Activated T-helper 2 cell treated with anti-CD3 and anti-CD28 coated beads, Interferon-gamma antibody, Interleukin-2, Interleukin-4, amounts not matched to agents 10 μg/mL and 5 μg/mL and 100 μg/mL, durations not matched to agents 14 hours and 24 hours and 36 hours (primary cell): ENCODE measurements at regions of chr5 and their contacts with region 1.

Region 1: GRCh38 chr5:134184155-134185135 is 7.7 kb upstream of the SKP1 start:
- DNase-seq: peak; percentile 66
- H3K4me3 Mint-ChIP-seq: no peak overlapping the region
- H3K27ac Mint-ChIP-seq: no peak overlapping the region
- H3K4me1 Mint-ChIP-seq: no peaks in the 10 kb centered on the region
- H3K27me3 Mint-ChIP-seq: peaks cover 8% of the 10 kb centered on the region

Region 2: DNA sequence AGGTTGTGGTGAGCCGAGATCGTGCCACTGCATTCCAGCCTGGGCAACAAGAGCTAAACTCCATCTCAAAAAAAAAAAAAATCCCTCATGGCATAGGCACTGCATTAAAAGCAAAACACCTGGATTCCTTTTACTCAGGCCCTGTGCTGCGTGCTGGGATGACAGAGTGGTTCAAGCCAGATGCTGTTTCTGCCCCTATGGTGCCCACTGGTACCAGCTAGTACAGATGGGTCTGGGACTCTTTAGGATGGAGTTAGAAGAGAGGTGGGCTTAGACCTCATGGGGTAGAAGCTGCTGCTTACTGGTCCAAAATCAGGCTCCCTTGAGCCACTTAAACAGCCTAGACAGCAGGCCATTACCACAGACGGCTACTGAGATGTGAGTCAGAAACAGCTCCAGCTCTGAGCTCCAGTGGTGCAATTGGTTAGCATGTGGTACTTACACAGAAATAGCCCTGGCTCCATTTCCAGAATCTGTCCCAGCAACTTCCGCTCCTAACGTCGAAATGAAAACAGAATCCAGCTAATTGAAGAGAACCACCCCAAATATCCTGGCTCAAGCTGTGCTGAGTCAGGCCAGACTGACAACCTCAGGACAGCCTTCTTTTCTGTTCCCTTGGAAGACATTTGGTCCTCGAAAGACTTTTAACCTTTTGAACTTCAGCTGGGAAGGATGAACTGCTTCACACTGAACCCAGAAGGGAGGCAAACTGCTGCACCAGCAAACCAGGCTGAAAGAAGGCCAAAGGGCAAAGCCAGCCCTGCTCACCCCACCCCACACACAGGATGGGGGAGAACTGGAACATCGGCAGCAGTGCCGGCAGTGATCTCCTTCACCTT is 231.5 kb before region 1 on chr5:
- intact Hi-C with region 1: no loop called
- DNase-seq: no peak
- H3K4me3 Mint-ChIP-seq: no peak overlapping the region
- H3K27ac Mint-ChIP-seq: no peak overlapping the region
- H3K4me1 Mint-ChIP-seq: peaks cover 11% of the 10 kb centered on the region
- H3K27me3 Mint-ChIP-seq: no peaks in the 10 kb centered on the region

Region 3: DNA sequence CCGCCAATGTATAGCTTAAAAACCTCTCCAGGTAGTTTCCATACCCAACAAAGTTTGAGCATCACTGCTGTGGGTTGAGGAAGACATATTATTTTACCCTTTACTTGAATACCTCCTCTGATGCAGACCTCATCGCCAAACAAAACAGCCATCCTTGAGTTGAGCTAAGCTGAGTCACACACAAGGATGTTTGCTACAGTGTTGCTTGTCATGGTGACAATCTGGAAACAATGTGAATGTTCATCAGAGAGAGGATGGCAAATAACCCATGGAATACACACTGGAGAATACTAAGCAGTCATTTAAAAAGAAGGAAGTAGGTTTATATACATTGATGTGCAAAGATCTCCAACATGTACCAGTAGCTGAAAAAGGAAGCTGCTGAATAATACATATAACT is 111.0 kb before region 1 on chr5:
- intact Hi-C with region 1: no loop called
- DNase-seq: no peak
- H3K4me3 Mint-ChIP-seq: no peak overlapping the region
- H3K27ac Mint-ChIP-seq: no peak overlapping the region
- H3K4me1 Mint-ChIP-seq: peaks cover 34% of the 10 kb centered on the region
- H3K27me3 Mint-ChIP-seq: peaks cover 57% of the 10 kb centered on the region

Region 4: DNA sequence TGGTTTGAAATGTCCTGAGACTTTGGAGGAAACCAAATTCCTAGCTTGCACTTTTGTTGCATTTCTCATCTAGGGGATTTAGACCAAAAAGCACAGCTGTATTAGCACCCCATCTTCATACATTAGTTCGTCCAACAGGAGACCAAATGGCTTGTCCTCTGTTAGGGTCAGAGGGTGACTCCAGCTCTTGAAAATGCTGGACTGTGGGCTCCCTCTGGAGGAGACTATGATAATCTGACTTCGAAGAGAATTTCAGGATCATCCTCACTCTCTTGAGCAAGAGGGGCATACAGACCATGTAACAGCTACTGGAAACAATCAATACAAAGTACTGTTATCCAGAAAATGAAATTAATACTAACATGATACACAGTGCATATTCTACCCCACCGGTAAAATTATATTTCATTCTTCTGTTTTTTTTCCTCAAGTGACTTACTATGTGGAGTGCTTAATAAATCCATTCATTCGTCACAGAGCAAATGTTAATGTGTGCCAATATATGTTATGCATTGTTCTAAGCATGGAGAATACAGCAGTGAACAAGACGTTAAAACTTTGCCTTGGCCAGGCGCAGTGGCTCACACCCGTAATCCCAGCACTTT is 105.2 kb after region 1 on chr5:
- intact Hi-C with region 1: loop called (anchors 1 kb)
- DNase-seq: peak; percentile 12
- H3K4me3 Mint-ChIP-seq: no peak overlapping the region
- H3K27ac Mint-ChIP-seq: no peak overlapping the region
- H3K4me1 Mint-ChIP-seq: no peaks in the 10 kb centered on the region
- H3K27me3 Mint-ChIP-seq: peaks cover 21% of the 10 kb centered on the region